ENCODE measurements at regions of chr3 and their contacts with region 1.

Region 1: GRCh38 chr3:41898631-41899030 is 63.3 kb downstream of the ULK4 start:
- DNase-seq: no peak
- H3K4me3 ChIP-seq: no peak overlapping the region
- H3K27ac ChIP-seq: no peak overlapping the region
- H3K4me1 ChIP-seq: no peaks in the 10 kb centered on the region
- H3K27me3 ChIP-seq: no peaks in the 10 kb centered on the region
- CTCF ChIP-seq: no peak
- POLR2A ChIP-seq: no peak

Region 2: GRCh38 chr3:42096796-42097565 is 198.3 kb after region 1 on chr3:
- intact Hi-C with region 1: loop called (anchors 5 kb)
- DNase-seq: no peak
- H3K4me3 ChIP-seq: no peak overlapping the region
- H3K27ac ChIP-seq: no peak overlapping the region
- H3K4me1 ChIP-seq: peaks cover 19% of the 10 kb centered on the region
- H3K27me3 ChIP-seq: no peaks in the 10 kb centered on the region
- CTCF ChIP-seq: no peak
- POLR2A ChIP-seq: no peak